ENCODE measurements at regions of chr14 and their contacts with region 1.

Region 1: GRCh38 chr14:32939254-32940065 is 781 bp downstream of the NPAS3 start:
- DNase-seq: peak; percentile 70
- H3K4me3 ChIP-seq: peak overlapping the region; percentile 49 to 52
- H3K27ac ChIP-seq: peak overlapping the region; percentile 77 to 81
- H3K4me1 ChIP-seq: no peaks in the 10 kb centered on the region
- H3K27me3 ChIP-seq: peaks cover 4% of the 10 kb centered on the region
- CTCF ChIP-seq: no peak
- POLR2A ChIP-seq: no peak

Region 2: GRCh38 chr14:32710731-32711680 is 228.5 kb before region 1 on chr14:
- intact Hi-C with region 1: loop called (anchors 10 kb)
- DNase-seq: peak; percentile 27
- H3K4me3 ChIP-seq: no peak overlapping the region
- H3K27ac ChIP-seq: no peak overlapping the region
- H3K4me1 ChIP-seq: no peaks in the 10 kb centered on the region
- H3K27me3 ChIP-seq: no peaks in the 10 kb centered on the region
- CTCF ChIP-seq: peak in 3 of 4 experiments; percentile 57 to 63 (median 57)
- POLR2A ChIP-seq: no peak

Region 3: GRCh38 chr14:33943096-33943884 is 1003.8 kb after region 1 on chr14:
- intact Hi-C with region 1: loop called (anchors 5 kb)
- DNase-seq: peak; percentile 22
- H3K4me3 ChIP-seq: no peak overlapping the region
- H3K27ac ChIP-seq: no peak overlapping the region
- H3K4me1 ChIP-seq: no peaks in the 10 kb centered on the region
- H3K27me3 ChIP-seq: no peaks in the 10 kb centered on the region
- CTCF ChIP-seq: no peak
- POLR2A ChIP-seq: no peak

Measured in prostate gland (tissue), 2 donors.